CD4-positive, alpha-beta T cell (primary cell): ENCODE measurements at regions of chr3 and their contacts with region 1.

Region 1: GRCh38 chr3:125916376-125916978 is 52.5 kb upstream of the ROPN1B start:
- DNase-seq: peak in 12 of 14 experiments; percentile 93 to 98 (median 96)
- ATAC-seq: peak; percentile 89
- H3K4me3 ChIP-seq: peak overlapping the region; percentile 72
- H3K4me3 Mint-ChIP-seq: peak overlapping the region; percentile 91
- H3K27ac ChIP-seq: peak overlapping the region; percentile 50 to 87
- H3K27ac Mint-ChIP-seq: peak overlapping the region; percentile 95
- H3K4me1 ChIP-seq: peaks cover 12% of the 10 kb centered on the region
- H3K4me1 Mint-ChIP-seq: peaks cover 12% of the 10 kb centered on the region
- H3K27me3 ChIP-seq: no peaks in the 10 kb centered on the region
- H3K27me3 Mint-ChIP-seq: no peaks in the 10 kb centered on the region
- CTCF ChIP-seq: no peak

Region 2: DNA sequence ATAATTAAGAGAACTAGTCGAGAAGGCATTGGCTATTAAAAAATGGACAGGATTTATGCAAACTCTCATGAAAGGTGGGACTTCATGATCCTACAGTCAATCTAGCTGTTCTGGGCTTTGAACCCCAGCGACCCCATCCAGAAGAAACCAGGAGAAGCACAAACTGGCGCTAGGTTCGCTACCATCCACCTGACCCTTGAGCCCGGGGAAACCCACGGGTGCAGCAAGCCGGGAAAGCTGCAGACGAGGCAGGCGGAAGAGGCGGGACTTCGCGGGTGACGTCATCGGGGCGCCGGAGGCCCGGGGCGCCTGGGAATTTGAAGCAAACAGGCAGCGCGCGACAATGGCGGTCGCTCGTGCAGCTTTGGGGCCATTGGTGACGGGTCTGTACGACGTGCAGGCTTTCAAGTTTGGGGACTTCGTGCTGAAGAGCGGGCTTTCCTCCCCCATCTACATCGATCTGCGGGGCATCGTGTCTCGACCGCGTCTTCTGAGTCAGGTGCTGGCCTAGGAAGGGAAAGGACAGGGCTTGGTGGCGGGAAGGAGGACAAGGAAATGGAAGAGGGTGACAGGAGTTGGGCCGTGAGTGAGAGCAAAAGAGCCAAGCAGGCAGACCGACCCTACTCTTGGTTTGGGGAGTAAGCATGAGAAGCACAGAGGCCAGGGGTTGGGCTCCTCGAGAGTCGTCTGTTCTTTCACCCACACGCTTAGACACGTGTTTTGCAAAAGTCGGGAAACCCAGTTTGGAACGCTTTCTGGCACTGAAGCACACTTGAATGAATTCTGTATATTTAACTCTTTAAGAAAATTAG is 1186.1 kb before region 1 on chr3 and contains the start of gene UMPS:
- CTCF ChIA-PET with region 1: no interaction called
- POLR2A ChIA-PET with region 1: no interaction called
- intact Hi-C with region 1: loop called in 1 of 2 experiments (anchors 5 kb)
- DNase-seq: peak; percentile 83 to 95 (median 91)
- ATAC-seq: peak; percentile 97
- H3K4me3 ChIP-seq: peak within 1 kb of the TSS; percentile 78
- H3K4me3 Mint-ChIP-seq: peak within 1 kb of the TSS; percentile 98
- H3K27ac ChIP-seq: peak within 1 kb of the TSS; percentile 54 to 76
- H3K27ac Mint-ChIP-seq: peak within 1 kb of the TSS; percentile 94
- H3K4me1 ChIP-seq: peaks cover 21% of the 10 kb centered on the region
- H3K4me1 Mint-ChIP-seq: peaks cover 44% of the 10 kb centered on the region
- H3K27me3 ChIP-seq: peaks cover 5 to 11% of the 10 kb centered on the region in 2 experiments
- H3K27me3 Mint-ChIP-seq: peaks cover 17% of the 10 kb centered on the region
- CTCF ChIP-seq: no peak
- total RNA-seq, gene UMPS: 19.5 to 19.7 TPM

Region 3: GRCh38 chr3:125186261-125186787 is 730.2 kb before region 1 on chr3:
- CTCF ChIA-PET with region 1: no interaction called
- POLR2A ChIA-PET with region 1: no interaction called
- intact Hi-C with region 1: no loop called
- DNase-seq: no peak
- ATAC-seq: no peak
- H3K4me3 ChIP-seq: no peak overlapping the region
- H3K4me3 Mint-ChIP-seq: no peak overlapping the region
- H3K27ac ChIP-seq: no peak overlapping the region
- H3K27ac Mint-ChIP-seq: no peak overlapping the region
- H3K4me1 ChIP-seq: no peaks in the 10 kb centered on the region
- H3K4me1 Mint-ChIP-seq: peaks cover 6% of the 10 kb centered on the region
- H3K27me3 ChIP-seq: no peaks in the 10 kb centered on the region
- H3K27me3 Mint-ChIP-seq: no peaks in the 10 kb centered on the region
- CTCF ChIP-seq: no peak

Region 4: DNA sequence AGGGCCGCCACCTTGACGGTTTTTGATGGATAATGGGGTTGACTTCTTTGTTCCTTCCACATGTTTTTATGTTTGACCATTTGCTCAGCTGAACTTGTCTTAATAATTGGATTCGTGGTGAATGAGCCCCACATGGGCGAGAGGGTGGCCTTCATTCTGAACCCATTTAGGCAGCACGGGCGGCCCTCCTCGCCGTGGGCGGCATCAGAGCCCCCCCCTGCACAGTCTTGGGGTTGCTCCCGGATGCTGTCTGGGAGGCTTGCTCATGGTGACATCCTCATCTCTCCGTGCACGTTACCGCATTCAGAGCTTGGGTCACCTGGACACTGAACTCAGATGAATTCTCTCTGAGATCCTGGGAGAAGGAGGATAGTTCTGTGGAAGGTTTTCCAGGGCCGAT is 148.8 kb before region 1 on chr3:
- CTCF ChIA-PET with region 1: interaction called, 4 read pairs
- POLR2A ChIA-PET with region 1: no interaction called
- intact Hi-C with region 1: loop called in 1 of 2 experiments (anchors 5 kb)
- DNase-seq: no peak
- ATAC-seq: no peak
- H3K4me3 ChIP-seq: no peak overlapping the region
- H3K4me3 Mint-ChIP-seq: peak overlapping the region; percentile 78
- H3K27ac ChIP-seq: no peak overlapping the region
- H3K27ac Mint-ChIP-seq: no peak overlapping the region
- H3K4me1 ChIP-seq: peaks cover 5% of the 10 kb centered on the region
- H3K4me1 Mint-ChIP-seq: no peaks in the 10 kb centered on the region
- H3K27me3 ChIP-seq: no peaks in the 10 kb centered on the region
- H3K27me3 Mint-ChIP-seq: peaks cover 20% of the 10 kb centered on the region
- CTCF ChIP-seq: no peak

Region 5: GRCh38 chr3:125990253-125990970 is 73.9 kb after region 1 on chr3:
- CTCF ChIA-PET with region 1: no interaction called
- POLR2A ChIA-PET with region 1: no interaction called
- intact Hi-C with region 1: loop called in 1 of 2 experiments (anchors 5 kb)
- DNase-seq: peak; percentile 48 to 85 (median 62)
- ATAC-seq: peak; percentile 88
- H3K4me3 ChIP-seq: peak overlapping the region; percentile 91
- H3K4me3 Mint-ChIP-seq: peak overlapping the region; percentile 98
- H3K27ac ChIP-seq: peak overlapping the region; percentile 73 to 87
- H3K27ac Mint-ChIP-seq: peak overlapping the region; percentile 99
- H3K4me1 ChIP-seq: peaks cover 8% of the 10 kb centered on the region
- H3K4me1 Mint-ChIP-seq: peaks cover 53% of the 10 kb centered on the region
- H3K27me3 ChIP-seq: no peaks in the 10 kb centered on the region
- H3K27me3 Mint-ChIP-seq: no peaks in the 10 kb centered on the region
- CTCF ChIP-seq: no peak

Region 6: DNA sequence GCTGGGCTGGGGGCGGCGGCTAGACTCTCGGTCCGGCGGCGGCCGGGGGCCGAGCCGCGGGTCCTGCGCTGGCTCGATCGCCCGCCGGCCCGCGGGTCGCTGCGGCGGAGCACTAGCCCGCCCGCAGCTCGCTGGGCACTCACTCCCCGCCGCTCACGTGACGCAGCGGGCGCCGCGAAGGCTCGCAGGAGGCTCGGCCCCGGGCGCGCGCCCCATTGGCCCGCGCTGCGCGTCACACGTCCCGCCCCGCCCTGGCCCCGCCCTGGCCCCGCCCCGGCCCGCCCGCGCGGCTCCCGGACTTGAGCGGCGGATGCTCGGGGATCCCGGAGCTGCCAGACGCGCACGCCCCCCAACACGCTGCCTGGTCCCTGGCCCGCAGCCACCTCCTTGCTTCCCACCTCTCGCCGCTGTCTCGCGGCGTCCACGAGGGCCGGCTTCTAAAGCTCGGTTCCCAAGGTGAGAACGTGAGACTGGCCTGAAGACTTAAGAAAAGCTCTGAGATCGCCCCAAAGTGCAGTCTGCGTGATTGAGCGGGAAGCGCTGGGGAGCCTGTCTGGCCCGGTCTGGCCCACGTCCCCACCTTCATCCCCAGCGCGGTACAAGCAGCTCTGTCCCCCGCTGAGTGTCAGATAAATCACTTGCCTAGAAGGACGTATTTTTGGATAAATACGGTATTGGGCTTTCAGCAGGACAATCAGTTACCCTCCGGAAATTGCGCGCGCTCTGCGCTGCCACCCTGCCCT is 441.0 kb after region 1 on chr3 and contains the start of gene KLF15:
- CTCF ChIA-PET with region 1: no interaction called
- POLR2A ChIA-PET with region 1: no interaction called
- intact Hi-C with region 1: loop called in 1 of 2 experiments (anchors 2 kb)
- DNase-seq: peak; percentile 42 to 88 (median 65)
- ATAC-seq: peak; percentile 91
- H3K4me3 ChIP-seq: peak within 1 kb of the TSS; percentile 65
- H3K4me3 Mint-ChIP-seq: peak within 1 kb of the TSS; percentile 93
- H3K27ac ChIP-seq: no peak within 1 kb of the TSS
- H3K27ac Mint-ChIP-seq: no peak within 1 kb of the TSS
- H3K4me1 ChIP-seq: peaks cover 24% of the 10 kb centered on the region
- H3K4me1 Mint-ChIP-seq: peaks cover 17% of the 10 kb centered on the region
- H3K27me3 ChIP-seq: peaks cover 45 to 49% of the 10 kb centered on the region in 2 experiments
- H3K27me3 Mint-ChIP-seq: peaks cover 58% of the 10 kb centered on the region
- CTCF ChIP-seq: no peak
- total RNA-seq, gene KLF15: 0.30 TPM in 1 of 2 experiments, not detected in the other

Region 7: DNA sequence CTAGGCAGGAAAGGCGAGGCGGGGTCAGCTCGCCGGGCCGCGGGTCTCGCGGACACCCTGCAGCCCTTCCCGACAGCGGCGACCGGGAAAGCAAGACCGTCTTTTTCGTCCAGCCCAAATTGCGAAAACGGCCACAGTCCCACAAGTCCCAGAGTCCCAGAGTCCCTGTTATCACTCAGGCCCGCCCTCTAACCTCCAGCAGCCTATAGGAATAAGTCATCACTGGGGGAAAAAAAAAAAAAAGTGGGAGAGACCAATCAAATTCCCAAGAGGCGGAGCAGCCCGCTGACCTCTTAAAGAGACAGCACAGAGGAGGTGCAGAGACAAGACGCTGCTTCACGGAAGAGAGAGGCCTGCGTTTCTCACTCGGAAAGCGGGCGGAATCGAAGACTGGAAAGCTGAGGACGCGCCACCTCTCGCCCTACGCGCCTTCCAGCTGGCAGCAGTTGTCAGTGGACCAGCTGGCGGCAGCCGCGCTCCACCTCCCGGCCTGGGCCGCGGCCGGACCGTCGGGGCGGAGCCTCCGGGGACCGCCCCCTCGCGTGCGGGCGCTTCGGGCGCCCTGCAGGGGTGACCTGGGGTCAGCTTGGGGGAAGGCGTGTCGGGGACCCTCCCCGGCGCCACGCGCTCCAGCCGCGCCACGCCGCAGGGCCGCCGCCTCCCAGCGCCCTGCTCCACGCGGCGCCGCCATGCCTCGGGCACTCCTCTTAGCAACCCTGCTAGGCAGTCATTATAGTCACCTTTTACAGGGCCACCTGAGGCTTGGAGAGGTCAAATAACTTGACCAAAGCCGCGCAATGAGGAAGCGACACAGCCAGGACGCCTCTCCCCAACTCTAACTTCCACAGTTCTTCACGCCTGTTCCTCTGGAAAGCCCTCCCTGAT is 1674.4 kb after region 1 on chr3 and contains the start of gene TPRA1:
- CTCF ChIA-PET with region 1: no interaction called
- POLR2A ChIA-PET with region 1: no interaction called
- intact Hi-C with region 1: loop called in 1 of 2 experiments (anchors 10 kb)
- DNase-seq: peak; percentile 51 to 93 (median 74)
- ATAC-seq: peak; percentile 89
- H3K4me3 ChIP-seq: peak within 1 kb of the TSS; percentile 71
- H3K4me3 Mint-ChIP-seq: peak within 1 kb of the TSS; percentile 99
- H3K27ac ChIP-seq: peak within 1 kb of the TSS; percentile 54 to 82
- H3K27ac Mint-ChIP-seq: peak within 1 kb of the TSS; percentile 93
- H3K4me1 ChIP-seq: peaks cover 36% of the 10 kb centered on the region
- H3K4me1 Mint-ChIP-seq: peaks cover 43% of the 10 kb centered on the region
- H3K27me3 ChIP-seq: no peaks in the 10 kb centered on the region
- H3K27me3 Mint-ChIP-seq: no peaks in the 10 kb centered on the region
- CTCF ChIP-seq: no peak
- total RNA-seq, gene TPRA1: 7.5 to 7.8 TPM